Activated CD4-positive, alpha-beta T cell treated with anti-CD3 and anti-CD28 coated beads for 36 hours (primary cell): ENCODE measurements at regions of chr15 and their contacts with region 1.

Region 1: DNA sequence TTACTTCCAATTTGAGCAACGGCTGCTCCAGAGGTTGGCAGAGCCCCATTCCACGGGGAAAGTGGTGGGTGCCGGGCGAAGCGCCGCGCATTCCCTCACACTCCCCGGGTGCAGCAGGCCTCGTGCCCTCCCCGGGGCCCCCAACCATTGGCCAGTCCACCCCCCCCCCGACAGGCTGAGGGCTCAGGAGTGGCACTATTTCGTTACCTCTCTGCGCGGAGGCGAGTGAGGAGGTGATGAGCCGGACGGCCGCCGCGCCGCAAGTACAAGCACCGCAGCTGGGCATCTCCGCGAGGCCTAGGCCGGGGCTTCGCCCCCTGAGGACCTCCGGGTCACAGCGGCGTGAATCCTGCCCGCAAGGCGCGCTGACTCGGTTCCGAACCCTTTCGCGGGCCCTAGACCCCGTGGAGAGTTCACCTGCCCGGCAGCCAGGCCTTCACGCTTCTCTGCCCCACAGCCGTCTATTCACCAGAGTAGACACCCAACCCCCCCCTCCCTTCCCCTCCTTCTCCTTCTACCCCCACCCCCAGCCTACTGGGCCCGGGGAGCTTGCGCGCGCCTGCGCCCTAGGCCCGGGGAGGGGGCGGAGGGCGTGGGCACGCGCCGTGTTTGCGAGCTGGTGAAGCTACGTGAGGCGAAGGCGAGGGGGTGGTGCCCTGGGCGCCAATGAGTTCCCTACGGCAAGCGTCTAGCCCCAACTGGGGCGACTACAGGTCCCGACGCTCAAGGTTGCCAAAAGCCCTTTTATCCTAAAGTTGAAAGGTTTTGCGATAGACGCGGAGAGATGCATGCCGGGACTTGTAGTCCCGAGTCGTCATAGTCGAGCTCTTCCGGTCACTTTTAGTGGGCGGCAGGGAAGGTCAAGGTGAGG is at the start of gene CLPX:
- DNase-seq: peak; percentile 95
- ATAC-seq: peak; percentile 93
- H3K4me3 Mint-ChIP-seq: peak within 1 kb of the TSS; percentile 92
- H3K27ac Mint-ChIP-seq: peak within 1 kb of the TSS; percentile 89
- H3K4me1 Mint-ChIP-seq: peaks cover 28% of the 10 kb centered on the region
- H3K27me3 Mint-ChIP-seq: no peaks in the 10 kb centered on the region
- total RNA-seq, gene CLPX: 65.2 to 73.7 TPM

Region 2: GRCh38 chr15:64989416-64990167 is 195.5 kb before region 1 on chr15 and contains the start of gene SPG21:
- CTCF ChIA-PET with region 1: no interaction called
- POLR2A ChIA-PET with region 1: no interaction called
- intact Hi-C with region 1: loop called in 1 of 2 experiments (anchors 1 kb)
- DNase-seq: peak; percentile 94
- ATAC-seq: peak; percentile 96
- H3K4me3 Mint-ChIP-seq: peak within 1 kb of the TSS; percentile 96
- H3K27ac Mint-ChIP-seq: peak within 1 kb of the TSS; percentile 88
- H3K4me1 Mint-ChIP-seq: peaks cover 37% of the 10 kb centered on the region
- H3K27me3 Mint-ChIP-seq: no peaks in the 10 kb centered on the region
- total RNA-seq, gene SPG21: 74.1 to 79.1 TPM

Region 3: GRCh38 chr15:65249641-65250040 is 64.5 kb after region 1 on chr15:
- CTCF ChIA-PET with region 1: no interaction called
- POLR2A ChIA-PET with region 1: interaction called, 4 read pairs
- intact Hi-C with region 1: loop called in 1 of 2 experiments (anchors 1 kb)
- DNase-seq: peak; percentile 92
- ATAC-seq: peak; percentile 99
- H3K4me3 Mint-ChIP-seq: peak overlapping the region; percentile 15
- H3K27ac Mint-ChIP-seq: peak overlapping the region; percentile 90
- H3K4me1 Mint-ChIP-seq: peaks cover 24% of the 10 kb centered on the region
- H3K27me3 Mint-ChIP-seq: no peaks in the 10 kb centered on the region

Region 4: GRCh38 chr15:65286704-65287519 is 101.8 kb after region 1 on chr15 and contains the start of gene PARP16:
- CTCF ChIA-PET with region 1: interaction called, 7 read pairs
- POLR2A ChIA-PET with region 1: interaction called, 20 read pairs
- intact Hi-C with region 1: loop called (anchors 1 to 2 kb)
- DNase-seq: peak; percentile 96
- ATAC-seq: peak; percentile 98
- H3K4me3 Mint-ChIP-seq: peak within 1 kb of the TSS; percentile 87
- H3K27ac Mint-ChIP-seq: peak within 1 kb of the TSS; percentile 89
- H3K4me1 Mint-ChIP-seq: peaks cover 30% of the 10 kb centered on the region
- H3K27me3 Mint-ChIP-seq: no peaks in the 10 kb centered on the region
- total RNA-seq, gene PARP16: 17.9 to 20.1 TPM

Region 5: GRCh38 chr15:65384895-65385858 is 200.1 kb after region 1 on chr15:
- CTCF ChIA-PET with region 1: interaction called, 4 read pairs
- POLR2A ChIA-PET with region 1: no interaction called
- intact Hi-C with region 1: loop called in 1 of 2 experiments (anchors 2 kb)
- DNase-seq: peak; percentile 93
- ATAC-seq: peak; percentile 90
- H3K4me3 Mint-ChIP-seq: peak overlapping the region; percentile 79
- H3K27ac Mint-ChIP-seq: peak overlapping the region; percentile 71
- H3K4me1 Mint-ChIP-seq: peaks cover 11% of the 10 kb centered on the region
- H3K27me3 Mint-ChIP-seq: peaks cover 10% of the 10 kb centered on the region

Region 6: DNA sequence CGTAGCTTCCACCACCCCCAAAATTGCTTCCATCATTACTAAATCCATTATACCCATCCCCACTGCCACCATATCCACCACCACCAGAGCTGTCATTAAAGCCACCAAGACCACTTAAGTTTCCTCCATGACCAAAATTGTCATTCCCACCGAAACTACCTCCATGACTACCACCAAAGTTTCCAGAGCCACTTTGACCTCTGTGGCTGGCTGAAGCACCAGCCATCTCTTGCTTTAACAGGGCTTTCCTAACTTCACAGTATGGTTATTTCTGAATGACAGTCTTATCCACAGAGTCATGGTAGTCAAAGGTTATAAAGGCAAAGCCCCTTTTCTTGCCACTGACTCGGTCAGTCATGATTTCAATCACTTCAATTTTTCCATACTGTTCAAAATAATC is 631.3 kb after region 1 on chr15:
- CTCF ChIA-PET with region 1: no interaction called
- POLR2A ChIA-PET with region 1: no interaction called
- intact Hi-C with region 1: no loop called
- DNase-seq: no peak
- ATAC-seq: no peak
- H3K4me3 Mint-ChIP-seq: no peak overlapping the region
- H3K27ac Mint-ChIP-seq: peak overlapping the region; percentile 28
- H3K4me1 Mint-ChIP-seq: peaks cover 49% of the 10 kb centered on the region
- H3K27me3 Mint-ChIP-seq: no peaks in the 10 kb centered on the region

Region 7: GRCh38 chr15:66504563-66505429 is 1319.7 kb after region 1 on chr15 and contains the starts of genes RPL4 and ZWILCH:
- CTCF ChIA-PET with region 1: no interaction called
- POLR2A ChIA-PET with region 1: no interaction called
- intact Hi-C with region 1: loop called in 1 of 2 experiments (anchors 10 kb)
- DNase-seq: peak; percentile 85
- ATAC-seq: peak; percentile 89
- H3K4me3 Mint-ChIP-seq: peak within 1 kb of the TSS; percentile 88
- H3K27ac Mint-ChIP-seq: peak within 1 kb of the TSS; percentile 98
- H3K4me1 Mint-ChIP-seq: peaks cover 56% of the 10 kb centered on the region
- H3K27me3 Mint-ChIP-seq: no peaks in the 10 kb centered on the region
- total RNA-seq, gene RPL4: 4,227 to 4,959 TPM
- total RNA-seq, gene ZWILCH: 27.4 to 31.1 TPM